Left colon (tissue), 2 donors: ENCODE measurements at regions of chr5 and their contacts with region 1.

Region 1: GRCh38 chr5:126676195-126676624 is 75.5 kb downstream of the PHAX start:
- DNase-seq: peak; percentile 55 to 60
- ATAC-seq: peak; percentile 61

Region 2: DNA sequence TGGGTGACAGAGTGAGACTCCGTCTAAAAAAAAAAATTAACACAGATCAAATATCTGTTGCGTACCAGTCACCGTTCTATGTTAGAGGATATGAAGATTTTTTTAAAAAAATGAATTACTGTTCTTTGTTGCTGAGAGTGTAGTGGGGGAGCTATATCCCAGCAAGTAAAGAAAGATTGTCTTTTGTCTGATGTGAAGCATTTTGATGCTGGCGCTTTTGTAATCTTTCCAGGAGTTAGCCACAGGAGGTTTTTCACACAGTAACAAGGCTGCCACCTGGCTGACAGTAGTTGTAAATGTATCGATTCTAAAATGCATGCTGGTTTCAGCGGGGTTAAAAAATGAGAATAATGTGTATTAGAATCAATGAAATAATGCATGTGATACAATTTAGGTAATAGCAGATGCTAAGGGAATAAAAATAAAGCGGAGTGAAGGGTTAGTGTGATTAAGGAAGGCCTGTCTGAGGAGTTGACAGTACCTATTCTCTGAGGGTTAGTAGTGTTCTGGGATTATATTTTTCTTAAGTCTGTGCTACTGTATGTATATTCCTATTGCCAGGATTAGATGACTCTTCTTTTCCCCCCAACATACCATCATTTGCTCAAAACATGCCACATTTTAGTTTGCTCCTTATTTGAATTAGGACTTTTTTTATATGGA is 104.1 kb after region 1 on chr5:
- intact Hi-C with region 1: loop called in 1 of 2 experiments (anchors 5 kb)
- DNase-seq: peak in 1 of 2 donors; percentile 47
- ATAC-seq: no peak